CD14-positive monocyte (primary cell): ENCODE measurements at regions of chr22 and their contacts with region 1.

Region 1: GRCh38 chr22:23913661-23914353 is 19.6 kb downstream of the MIF start:
- DNase-seq: peak; percentile 98
- H3K4me3 ChIP-seq: peak overlapping the region; percentile 52 to 80 (median 70)
- H3K4me3 Mint-ChIP-seq: peak overlapping the region; percentile 97 to 99
- H3K27ac ChIP-seq: peak overlapping the region; percentile 71 to 88
- H3K27ac Mint-ChIP-seq: peak overlapping the region; percentile 91 to 99 (median 98)
- H3K4me1 ChIP-seq: peaks cover 7 to 18% of the 10 kb centered on the region in 2 donors
- H3K4me1 Mint-ChIP-seq: peaks cover 10% of the 10 kb centered on the region
- H3K27me3 ChIP-seq: no peaks in the 10 kb centered on the region
- H3K27me3 Mint-ChIP-seq: peaks cover 1 to 4% (median 2%) of the 10 kb centered on the region in 3 donors
- CTCF ChIP-seq: no peak

Region 2: GRCh38 chr22:23786752-23787599 is 126.8 kb before region 1 on chr22 and contains the start of gene SMARCB1:
- intact Hi-C with region 1: loop called in 1 of 2 experiments (anchors 5 kb)
- DNase-seq: peak; percentile 84 to 87 (median 85)
- H3K4me3 ChIP-seq: peak within 1 kb of the TSS; percentile 46 to 80 (median 77)
- H3K4me3 Mint-ChIP-seq: peak within 1 kb of the TSS; percentile 81 to 91
- H3K27ac ChIP-seq: peak within 1 kb of the TSS; percentile 89 to 93
- H3K27ac Mint-ChIP-seq: peak within 1 kb of the TSS; percentile 82 to 94 (median 87)
- H3K4me1 ChIP-seq: peaks cover 14 to 19% of the 10 kb centered on the region in 2 donors
- H3K4me1 Mint-ChIP-seq: peaks cover 15% of the 10 kb centered on the region
- H3K27me3 ChIP-seq: no peaks in the 10 kb centered on the region
- H3K27me3 Mint-ChIP-seq: peaks cover 0 to 3% (median 1%) of the 10 kb centered on the region in 3 donors
- CTCF ChIP-seq: no peak
- polyA plus RNA-seq, gene SMARCB1: 30.3 to 71.8 (median 31.5) TPM

Region 3: DNA sequence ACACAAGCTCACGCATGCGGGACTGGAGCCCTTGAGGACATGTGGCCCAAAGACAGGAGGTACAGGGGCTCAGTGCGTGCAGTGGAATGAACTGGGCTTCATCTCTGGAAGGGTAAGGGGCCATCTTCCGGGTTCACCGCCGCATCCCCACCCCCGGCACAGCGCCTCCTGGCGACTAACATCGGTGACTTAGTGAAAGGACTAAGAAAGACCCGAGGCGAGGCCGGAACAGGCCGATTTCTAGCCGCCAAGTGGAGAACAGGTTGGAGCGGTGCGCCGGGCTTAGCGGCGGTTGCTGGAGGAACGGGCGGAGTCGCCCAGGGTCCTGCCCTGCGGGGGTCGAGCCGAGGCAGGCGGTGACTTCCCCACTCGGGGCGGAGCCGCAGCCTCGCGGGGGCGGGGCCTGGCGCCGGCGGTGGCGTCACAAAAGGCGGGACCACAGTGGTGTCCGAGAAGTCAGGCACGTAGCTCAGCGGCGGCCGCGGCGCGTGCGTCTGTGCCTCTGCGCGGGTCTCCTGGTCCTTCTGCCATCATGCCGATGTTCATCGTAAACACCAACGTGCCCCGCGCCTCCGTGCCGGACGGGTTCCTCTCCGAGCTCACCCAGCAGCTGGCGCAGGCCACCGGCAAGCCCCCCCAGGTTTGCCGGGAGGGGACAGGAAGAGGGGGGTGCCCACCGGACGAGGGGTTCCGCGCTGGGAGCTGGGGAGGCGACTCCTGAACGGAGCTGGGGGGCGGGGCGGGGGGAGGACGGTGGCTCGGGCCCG is 19.7 kb before region 1 on chr22 and contains the start of gene MIF:
- intact Hi-C with region 1: loop called (anchors 2 kb)
- DNase-seq: peak; percentile 86 to 90 (median 90)
- H3K4me3 ChIP-seq: peak within 1 kb of the TSS; percentile 57 to 87 (median 84)
- H3K4me3 Mint-ChIP-seq: peak within 1 kb of the TSS; percentile 89 to 92
- H3K27ac ChIP-seq: peak within 1 kb of the TSS; percentile 89 to 92
- H3K27ac Mint-ChIP-seq: peak within 1 kb of the TSS; percentile 89 to 97 (median 95)
- H3K4me1 ChIP-seq: peaks cover 22 to 28% of the 10 kb centered on the region in 2 donors
- H3K4me1 Mint-ChIP-seq: peaks cover 30% of the 10 kb centered on the region
- H3K27me3 ChIP-seq: no peaks in the 10 kb centered on the region
- H3K27me3 Mint-ChIP-seq: peaks cover 3 to 12% (median 5%) of the 10 kb centered on the region in 3 donors
- CTCF ChIP-seq: peak; percentile 95
- polyA plus RNA-seq, gene MIF: 66.4 to 390 (median 338) TPM

Region 4: GRCh38 chr22:23970816-23971486 is 57.1 kb after region 1 on chr22:
- intact Hi-C with region 1: loop called in 1 of 2 experiments (anchors 5 kb)
- DNase-seq: no peak
- H3K4me3 ChIP-seq: no peak overlapping the region
- H3K4me3 Mint-ChIP-seq: no peak overlapping the region
- H3K27ac ChIP-seq: no peak overlapping the region
- H3K27ac Mint-ChIP-seq: peak overlapping the region in 3 of 7 donors; percentile 7 to 48 (median 37)
- H3K4me1 ChIP-seq: no peaks in the 10 kb centered on the region
- H3K4me1 Mint-ChIP-seq: no peaks in the 10 kb centered on the region
- H3K27me3 ChIP-seq: no peaks in the 10 kb centered on the region
- H3K27me3 Mint-ChIP-seq: no peaks in the 10 kb centered on the region
- CTCF ChIP-seq: no peak